Colonic mucosa (tissue), 4 donors: ENCODE measurements at regions of chr10 and their contacts with region 1.

Region 1: DNA sequence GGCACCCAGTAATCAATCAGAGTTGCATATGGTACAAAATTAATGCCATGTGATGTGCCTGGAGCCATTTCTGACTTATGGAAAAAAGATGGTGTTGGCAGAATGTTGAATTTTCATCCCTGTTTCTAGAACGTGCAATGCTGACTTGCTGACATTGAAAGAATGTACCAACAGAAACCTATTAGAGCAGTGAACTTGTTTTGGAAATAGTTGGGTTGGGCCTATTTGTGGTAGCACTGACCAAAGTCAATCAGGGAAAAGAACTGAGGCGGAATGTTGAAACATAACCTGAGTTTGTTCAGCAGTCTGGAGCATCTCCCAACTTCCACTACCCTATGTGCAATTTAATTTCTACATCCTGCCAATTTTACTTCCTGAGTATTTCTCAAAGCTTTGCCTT is 11.7 kb upstream of the KIAA1217 start:
- DNase-seq: no peak
- H3K4me3 ChIP-seq: no peak overlapping the region
- H3K27ac ChIP-seq: no peak overlapping the region
- H3K4me1 ChIP-seq: no peaks in the 10 kb centered on the region
- H3K27me3 ChIP-seq: no peaks in the 10 kb centered on the region
- CTCF ChIP-seq: no peak

Region 2: GRCh38 chr10:24344279-24344678 is 147.0 kb after region 1 on chr10:
- intact Hi-C with region 1: no loop called
- DNase-seq: no peak
- H3K4me3 ChIP-seq: no peak overlapping the region
- H3K27ac ChIP-seq: no peak overlapping the region
- H3K4me1 ChIP-seq: no peaks in the 10 kb centered on the region
- H3K27me3 ChIP-seq: no peaks in the 10 kb centered on the region
- CTCF ChIP-seq: no peak

Region 3: DNA sequence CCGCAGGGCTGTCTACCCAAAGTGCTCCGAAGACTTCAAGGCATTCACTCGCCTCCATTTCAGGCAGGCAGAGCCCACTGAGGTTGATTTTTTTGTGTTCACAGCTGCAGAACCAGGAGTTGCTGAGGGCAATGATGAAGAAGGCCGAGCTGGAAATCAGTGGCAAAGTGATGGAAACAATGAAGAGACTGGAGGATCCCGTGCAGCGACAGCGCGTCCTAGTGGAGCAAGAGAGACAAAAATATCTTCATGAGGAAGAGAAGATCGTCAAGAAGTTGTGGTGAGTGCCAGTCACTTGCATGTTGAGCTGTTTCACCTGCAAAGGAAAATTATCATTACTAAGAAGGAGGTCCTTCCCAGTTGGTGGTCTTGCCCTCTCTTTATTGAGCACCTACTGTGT is 315.9 kb after region 1 on chr10:
- intact Hi-C with region 1: loop called (anchors 5 kb)
- DNase-seq: peak; percentile 38
- H3K4me3 ChIP-seq: no peak overlapping the region
- H3K27ac ChIP-seq: no peak overlapping the region
- H3K4me1 ChIP-seq: no peaks in the 10 kb centered on the region
- H3K27me3 ChIP-seq: no peaks in the 10 kb centered on the region
- CTCF ChIP-seq: no peak